ENCODE measurements at regions of chr19 and their contacts with region 1.

Region 1: GRCh38 chr19:49676690-49677231 is 310 bp upstream of the PRMT1 start:
- DNase-seq: peak; percentile 93
- ATAC-seq: peak; percentile 67
- H3K4me3 Mint-ChIP-seq: peak overlapping the region; percentile 99
- H3K27ac Mint-ChIP-seq: peak overlapping the region; percentile 99
- H3K4me1 Mint-ChIP-seq: peaks cover 70% of the 10 kb centered on the region
- H3K27me3 Mint-ChIP-seq: no peaks in the 10 kb centered on the region
- CTCF ChIP-seq: no peak

Region 2: DNA sequence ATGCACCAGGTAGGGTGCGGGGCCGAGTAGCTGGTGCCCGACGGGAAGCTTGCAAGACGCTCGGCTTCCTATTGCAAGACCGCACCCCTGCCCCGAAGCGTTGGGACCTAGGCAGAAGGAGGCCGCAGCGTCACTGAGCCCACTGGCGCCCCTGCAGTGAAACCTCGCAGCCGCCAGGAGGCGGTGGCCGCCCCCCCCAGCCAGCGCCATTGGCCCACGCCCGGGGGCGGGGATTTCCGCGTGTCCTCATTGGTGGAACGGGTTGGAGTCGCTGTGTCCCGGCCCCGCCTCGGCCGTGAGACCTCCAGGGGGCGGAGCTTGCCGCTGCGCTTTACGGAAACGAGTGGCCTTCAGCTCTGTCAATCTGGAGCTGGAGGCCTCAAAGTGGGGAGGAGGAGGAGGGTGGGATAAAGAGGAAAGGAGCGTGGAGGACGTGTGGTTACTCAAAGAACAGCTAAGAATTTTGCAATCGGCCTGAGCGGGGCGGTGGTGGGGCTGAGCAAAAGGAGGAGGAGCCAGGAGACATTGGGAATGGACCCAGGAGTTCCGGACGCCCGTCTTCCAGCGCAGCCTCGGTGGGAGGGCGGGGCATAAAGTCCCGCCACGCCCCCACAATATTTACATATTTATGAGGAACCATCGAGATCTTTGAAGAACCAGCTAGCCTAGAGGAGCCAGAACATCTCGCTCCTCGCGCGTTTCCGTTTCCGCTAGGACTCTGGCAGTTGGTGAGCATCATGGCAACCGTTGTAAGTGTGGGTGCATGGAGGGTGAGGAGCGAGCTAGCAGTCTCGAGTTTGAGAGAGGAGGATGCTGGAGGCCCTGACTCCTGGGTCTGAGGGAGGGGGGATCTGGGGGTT is 683.4 kb before region 1 on chr19 and contains the starts of genes GYS1 and RUVBL2:
- CTCF ChIA-PET with region 1: no interaction called
- POLR2A ChIA-PET with region 1: interaction called, 7 read pairs
- intact Hi-C with region 1: loop called (anchors 10 kb)
- DNase-seq: peak; percentile 96
- ATAC-seq: peak; percentile 92
- H3K4me3 Mint-ChIP-seq: peak within 1 kb of the TSS; percentile 97
- H3K27ac Mint-ChIP-seq: peak within 1 kb of the TSS; percentile 97
- H3K4me1 Mint-ChIP-seq: peaks cover 33% of the 10 kb centered on the region
- H3K27me3 Mint-ChIP-seq: no peaks in the 10 kb centered on the region
- CTCF ChIP-seq: peak; percentile 94
- total RNA-seq, gene GYS1: 50.7 and 52.7 TPM in 2 replicates
- total RNA-seq, gene RUVBL2: 75.6 and 79.4 TPM in 2 replicates

Region 3: GRCh38 chr19:49473868-49474544 is 202.8 kb before region 1 on chr19 and contains the start of gene FLT3LG:
- CTCF ChIA-PET with region 1: no interaction called
- POLR2A ChIA-PET with region 1: interaction called, 9 read pairs
- intact Hi-C with region 1: loop called (anchors 1 kb)
- DNase-seq: peak; percentile 92
- ATAC-seq: peak; percentile 45
- H3K4me3 Mint-ChIP-seq: peak within 1 kb of the TSS; percentile 92
- H3K27ac Mint-ChIP-seq: peak within 1 kb of the TSS; percentile 91
- H3K4me1 Mint-ChIP-seq: peaks cover 67% of the 10 kb centered on the region
- H3K27me3 Mint-ChIP-seq: no peaks in the 10 kb centered on the region
- CTCF ChIP-seq: peak; percentile 52
- total RNA-seq, gene FLT3LG: 15.4 and 17.7 TPM in 2 replicates

Region 4: GRCh38 chr19:49570138-49570856 is 106.5 kb before region 1 on chr19:
- CTCF ChIA-PET with region 1: interaction called, 25 read pairs
- POLR2A ChIA-PET with region 1: interaction called, 5 read pairs
- intact Hi-C with region 1: loop called (anchors 1 kb)
- DNase-seq: no peak
- ATAC-seq: peak; percentile 93
- H3K4me3 Mint-ChIP-seq: peak overlapping the region; percentile 41
- H3K27ac Mint-ChIP-seq: peak overlapping the region; percentile 53
- H3K4me1 Mint-ChIP-seq: peaks cover 30% of the 10 kb centered on the region
- H3K27me3 Mint-ChIP-seq: no peaks in the 10 kb centered on the region
- CTCF ChIP-seq: peak; percentile 98

Region 5: DNA sequence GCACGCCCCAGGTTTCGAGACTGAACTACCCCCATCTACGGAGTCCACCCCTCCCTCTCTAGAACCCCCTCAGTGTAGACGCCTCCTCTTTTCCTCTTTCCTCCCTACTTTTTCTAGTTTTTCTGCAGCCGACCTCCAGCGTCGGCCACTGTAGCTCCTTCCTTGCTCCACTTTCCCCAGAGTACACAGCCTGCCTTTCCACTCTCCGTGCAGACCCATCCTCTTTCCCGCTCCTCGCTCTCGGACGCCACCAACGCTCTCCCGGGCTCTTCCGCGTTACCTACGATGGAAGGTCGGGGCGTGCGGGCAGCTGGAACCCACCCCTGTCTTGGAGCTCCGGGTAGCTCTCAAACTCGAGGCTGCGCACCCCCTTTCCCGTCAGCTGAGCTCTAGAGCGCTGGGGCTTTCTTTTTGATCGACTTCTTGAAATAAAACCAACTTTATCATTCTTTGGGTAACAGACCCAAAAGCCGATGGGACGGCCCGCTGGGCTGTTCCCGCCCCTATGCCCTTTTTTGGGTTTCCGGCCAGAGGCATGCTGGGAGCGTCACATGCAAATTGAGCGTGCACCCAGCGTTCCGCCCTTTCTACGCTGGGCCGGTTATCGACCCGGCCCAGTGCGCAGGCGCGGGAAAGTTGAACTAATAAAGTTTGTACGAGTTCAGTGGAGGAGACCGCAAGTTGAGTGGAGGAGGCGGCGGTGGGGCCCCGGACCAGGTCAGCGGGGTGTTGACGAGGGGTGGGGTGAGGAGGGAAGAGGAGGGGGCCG is 11.2 kb before region 1 on chr19 and contains the starts of genes BCL2L12 and IRF3:
- CTCF ChIA-PET with region 1: interaction called, 13 read pairs
- POLR2A ChIA-PET with region 1: interaction called, 88 read pairs
- intact Hi-C with region 1: loop called (anchors 1 kb)
- DNase-seq: peak; percentile 99
- ATAC-seq: peak; percentile 86
- H3K4me3 Mint-ChIP-seq: peak within 1 kb of the TSS; percentile 98
- H3K27ac Mint-ChIP-seq: peak within 1 kb of the TSS; percentile 95
- H3K4me1 Mint-ChIP-seq: peaks cover 40% of the 10 kb centered on the region
- H3K27me3 Mint-ChIP-seq: no peaks in the 10 kb centered on the region
- CTCF ChIP-seq: no peak
- total RNA-seq, gene BCL2L12: 30.7 and 39.1 TPM in 2 replicates
- total RNA-seq, gene IRF3: 145 and 171 TPM in 2 replicates

Region 6: DNA sequence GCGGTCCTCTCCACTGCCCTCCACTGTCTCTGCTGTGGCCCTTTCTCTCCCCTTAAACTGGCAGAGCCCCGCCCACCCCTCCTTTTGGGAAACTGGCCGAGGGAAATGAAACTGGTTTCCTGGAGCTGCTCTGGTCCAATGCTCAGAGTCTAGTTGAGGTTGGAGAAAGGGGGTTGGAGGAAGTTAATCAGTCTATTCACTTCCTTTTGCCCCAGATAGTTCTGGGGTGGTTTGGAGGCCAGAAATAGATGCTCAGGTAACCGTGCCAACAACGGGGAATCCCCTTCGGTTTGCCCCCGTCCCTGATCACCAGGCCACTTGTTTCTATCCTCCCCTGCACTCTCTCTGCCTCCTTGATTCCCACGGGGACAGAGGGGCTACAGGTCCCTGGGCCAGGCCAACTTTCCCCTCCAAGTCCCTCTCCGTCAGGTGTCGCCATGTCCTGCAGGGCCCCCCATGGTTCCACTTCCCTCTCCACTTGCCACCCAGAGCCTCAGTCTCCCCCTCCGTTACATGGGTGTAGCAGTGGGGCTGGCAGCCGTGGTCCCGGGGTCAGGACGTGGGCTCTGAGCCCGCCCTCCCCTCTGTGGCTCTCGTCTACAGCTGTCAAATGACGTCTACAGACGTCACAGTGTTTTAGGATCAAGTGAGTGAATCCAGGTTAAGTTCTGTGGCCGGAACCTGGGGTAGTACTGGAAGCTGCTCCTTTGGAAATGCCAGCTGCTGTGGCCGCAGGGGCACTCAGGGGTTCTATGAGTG is 220.3 kb after region 1 on chr19 and contains the start of gene IL4I1:
- CTCF ChIA-PET with region 1: no interaction called
- POLR2A ChIA-PET with region 1: interaction called, 17 read pairs
- intact Hi-C with region 1: no loop called
- DNase-seq: peak; percentile 76
- ATAC-seq: peak; percentile 72
- H3K4me3 Mint-ChIP-seq: peak within 1 kb of the TSS; percentile 87
- H3K27ac Mint-ChIP-seq: peak within 1 kb of the TSS; percentile 99
- H3K4me1 Mint-ChIP-seq: peaks cover 67% of the 10 kb centered on the region
- H3K27me3 Mint-ChIP-seq: no peaks in the 10 kb centered on the region
- CTCF ChIP-seq: no peak
- total RNA-seq, gene IL4I1: 24.0 and 25.5 TPM in 2 replicates

Region 7: DNA sequence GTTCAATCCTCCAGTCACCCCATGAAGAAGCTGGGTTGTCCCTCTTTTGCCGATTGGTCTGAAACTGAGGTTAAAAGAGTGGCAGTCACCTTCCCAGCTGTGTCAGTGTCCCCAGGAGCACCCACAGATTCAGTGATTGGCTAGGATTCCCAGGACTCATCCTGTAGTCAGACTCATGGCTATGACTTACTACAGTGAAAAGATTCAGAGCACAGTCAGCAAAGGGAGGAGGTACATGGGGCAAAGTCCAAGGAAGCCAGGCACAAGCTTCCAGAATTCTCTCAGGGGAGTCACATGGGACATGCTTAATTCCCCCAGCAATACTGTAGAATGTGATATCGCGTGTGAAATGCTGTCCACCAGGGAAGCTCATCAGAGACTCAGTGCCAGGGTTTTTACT is 363.2 kb after region 1 on chr19:
- CTCF ChIA-PET with region 1: no interaction called
- POLR2A ChIA-PET with region 1: no interaction called
- intact Hi-C with region 1: no loop called
- DNase-seq: no peak
- ATAC-seq: no peak
- H3K4me3 Mint-ChIP-seq: no peak overlapping the region
- H3K27ac Mint-ChIP-seq: no peak overlapping the region
- H3K4me1 Mint-ChIP-seq: no peaks in the 10 kb centered on the region
- H3K27me3 Mint-ChIP-seq: no peaks in the 10 kb centered on the region
- CTCF ChIP-seq: no peak